Activated naive CD8-positive, alpha-beta T cell treated with anti-CD3 and anti-CD28 coated beads, Interleukin-2, amount 10 ng/mL, durations not matched to agents 7 days and 5 days (primary cell): ENCODE measurements at regions of chr7 and their contacts with region 1.

Region 1: GRCh38 chr7:75727881-75728592 is 10.7 kb downstream of the HIP1 start:
- DNase-seq: peak; percentile 53
- ATAC-seq: peak; percentile 97
- H3K4me3 Mint-ChIP-seq: peak overlapping the region; percentile 73
- H3K27ac Mint-ChIP-seq: peak overlapping the region; percentile 78
- H3K4me1 Mint-ChIP-seq: peaks cover 22% of the 10 kb centered on the region
- H3K27me3 Mint-ChIP-seq: no peaks in the 10 kb centered on the region

Region 2: GRCh38 chr7:75565132-75565837 is 162.8 kb before region 1 on chr7:
- POLR2A ChIA-PET with region 1: no interaction called
- DNase-seq: no peak
- ATAC-seq: peak; percentile 60
- H3K4me3 Mint-ChIP-seq: no peak overlapping the region
- H3K27ac Mint-ChIP-seq: peak overlapping the region; percentile 68
- H3K4me1 Mint-ChIP-seq: peaks cover 6% of the 10 kb centered on the region
- H3K27me3 Mint-ChIP-seq: no peaks in the 10 kb centered on the region

Region 3: DNA sequence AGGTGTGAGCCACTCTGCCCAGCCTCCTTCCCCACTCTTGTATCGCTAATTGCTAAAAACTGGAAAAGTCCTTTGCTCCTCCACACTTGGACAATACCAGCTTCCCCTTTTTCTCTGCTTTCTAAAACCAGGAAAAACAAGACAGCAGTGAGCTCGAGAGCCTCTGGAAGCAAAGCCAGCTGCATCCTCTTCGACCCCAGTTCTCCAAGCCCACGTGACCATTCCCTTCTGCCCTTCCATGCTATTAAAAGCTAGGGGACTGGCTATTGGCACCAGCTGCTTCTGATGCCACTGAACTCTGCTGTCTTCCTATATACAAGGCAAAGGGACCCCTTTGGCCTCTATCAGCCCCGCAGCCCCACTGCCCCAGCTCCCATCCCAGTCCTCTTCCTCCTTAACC is 143.7 kb before region 1 on chr7:
- POLR2A ChIA-PET with region 1: no interaction called
- DNase-seq: no peak
- ATAC-seq: no peak
- H3K4me3 Mint-ChIP-seq: no peak overlapping the region
- H3K27ac Mint-ChIP-seq: no peak overlapping the region
- H3K4me1 Mint-ChIP-seq: no peaks in the 10 kb centered on the region
- H3K27me3 Mint-ChIP-seq: no peaks in the 10 kb centered on the region

Region 4: DNA sequence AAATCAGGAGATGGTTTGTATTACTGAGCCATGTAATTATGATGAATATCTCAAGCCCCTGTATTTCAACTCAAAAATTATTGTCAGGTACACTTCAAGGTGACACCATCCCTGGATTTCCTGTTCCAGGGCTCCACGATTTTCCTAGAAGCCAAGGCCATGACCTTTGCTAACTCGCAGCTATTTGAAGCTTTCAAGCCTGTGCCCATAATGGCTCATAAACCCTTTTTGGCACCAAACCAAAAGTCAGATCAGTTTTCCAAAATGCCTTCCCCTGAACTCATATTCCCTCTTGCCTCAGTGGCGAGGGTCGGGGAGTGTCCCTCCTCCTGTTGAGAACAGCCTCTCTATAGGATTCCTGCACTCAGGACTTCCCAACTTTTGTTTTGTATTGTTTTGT is 60.1 kb before region 1 on chr7:
- POLR2A ChIA-PET with region 1: no interaction called
- DNase-seq: no peak
- ATAC-seq: no peak
- H3K4me3 Mint-ChIP-seq: no peak overlapping the region
- H3K27ac Mint-ChIP-seq: no peak overlapping the region
- H3K4me1 Mint-ChIP-seq: no peaks in the 10 kb centered on the region
- H3K27me3 Mint-ChIP-seq: no peaks in the 10 kb centered on the region

Region 5: GRCh38 chr7:75738987-75739795 is 11.2 kb after region 1 on chr7:
- POLR2A ChIA-PET with region 1: interaction called, 20 read pairs
- DNase-seq: peak; percentile 99
- ATAC-seq: peak; percentile 98
- H3K4me3 Mint-ChIP-seq: peak overlapping the region; percentile 92
- H3K27ac Mint-ChIP-seq: peak overlapping the region; percentile 92
- H3K4me1 Mint-ChIP-seq: peaks cover 12% of the 10 kb centered on the region
- H3K27me3 Mint-ChIP-seq: peaks cover 37% of the 10 kb centered on the region